Gastrocnemius medialis (tissue), 4 donors: ENCODE measurements at regions of chr20 and their contacts with region 1.

Region 1: DNA sequence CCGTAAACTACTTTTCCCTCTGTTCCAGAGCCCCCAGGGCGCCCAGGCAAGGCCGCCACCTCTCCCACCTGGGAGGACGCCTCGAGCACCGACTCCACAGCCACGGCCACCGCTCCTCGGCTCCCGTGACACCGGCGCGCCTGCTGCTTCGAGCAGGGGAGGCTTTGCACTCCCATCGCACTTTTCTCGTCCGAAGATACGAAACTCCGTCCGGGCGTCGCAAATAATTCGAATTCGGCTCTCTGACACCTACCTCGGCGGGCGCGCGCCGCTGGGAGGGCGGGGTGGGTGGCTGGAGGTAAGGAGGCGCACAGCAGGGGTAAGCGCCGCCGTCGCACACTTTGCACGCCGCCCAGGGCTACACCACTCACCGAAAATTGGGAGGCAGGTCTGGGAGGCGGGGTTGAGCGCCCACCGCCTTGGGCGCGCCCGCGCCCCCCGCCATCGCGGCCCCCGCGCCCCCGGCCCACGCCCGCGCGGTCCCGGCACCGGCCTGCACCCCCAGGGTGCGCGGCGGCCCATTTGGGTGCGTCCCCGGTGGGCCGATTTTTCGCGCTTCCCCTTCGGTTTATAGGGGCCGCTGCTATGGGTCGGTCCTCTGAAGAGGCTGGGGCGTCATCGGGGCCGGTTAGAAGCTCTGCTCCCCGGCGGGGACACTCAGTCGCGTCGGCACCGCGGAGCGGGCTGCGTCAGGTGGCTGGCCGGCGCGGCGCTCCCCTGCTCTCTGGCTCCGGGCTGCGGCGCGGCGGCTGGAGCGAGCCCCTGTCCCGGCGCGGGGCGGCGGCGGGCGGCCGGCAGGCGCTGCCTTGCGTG is 36.2 kb downstream of the GNAS start:
- DNase-seq: peak; percentile 74 to 82
- ATAC-seq: peak; percentile 50 to 51
- H3K4me3 ChIP-seq: peak overlapping the region; percentile 68 to 95 (median 78)
- H3K27ac ChIP-seq: peak overlapping the region; percentile 97 to 100 (median 99)
- H3K4me1 ChIP-seq: peaks cover 12 to 16% of the 10 kb centered on the region in 2 donors
- H3K27me3 ChIP-seq: no peaks in the 10 kb centered on the region
- CTCF ChIP-seq: no peak
- POLR2A ChIP-seq: peak; percentile 97 to 98

Region 2: DNA sequence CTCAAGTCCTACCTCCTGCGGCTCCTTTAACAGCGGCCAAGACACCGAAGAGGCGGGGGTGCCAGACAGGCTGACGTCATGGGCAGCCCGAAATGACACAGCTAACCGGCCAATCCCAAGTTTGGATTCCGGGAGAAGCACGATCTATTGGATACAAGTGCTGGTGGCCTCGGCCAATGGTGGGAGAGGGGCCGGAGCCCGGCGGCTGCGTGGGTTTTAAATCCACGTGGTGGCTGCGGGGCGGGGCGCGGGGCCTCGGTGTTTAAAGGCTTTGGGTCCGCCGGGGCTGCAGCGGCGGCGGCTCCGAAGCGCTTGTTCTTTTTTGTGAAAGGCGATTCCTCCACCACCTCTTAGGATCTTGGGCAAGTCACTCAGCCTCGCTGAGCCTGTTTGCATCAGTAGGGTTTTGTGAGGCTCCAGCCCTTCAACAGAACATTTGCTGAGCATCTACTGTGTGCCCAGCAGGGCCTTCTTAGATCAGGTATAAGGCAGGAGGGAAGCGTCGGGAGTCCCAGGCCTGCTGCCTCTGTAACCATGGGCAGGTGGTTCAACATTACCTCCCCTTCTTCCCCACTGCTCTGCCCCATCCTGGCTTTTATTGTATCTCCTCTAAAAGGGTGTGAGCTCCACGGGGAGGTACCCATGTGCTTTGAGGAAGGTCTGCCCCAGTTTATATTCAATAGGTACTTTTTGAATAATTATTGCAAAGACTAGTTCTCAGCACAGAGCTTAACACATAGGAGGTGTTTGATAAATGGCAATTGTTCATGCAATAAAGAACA is 1170.0 kb before region 1 on chr20:
- in situ Hi-C with region 1: no loop called
- intact Hi-C with region 1: loop called (anchors 10 kb)
- DNase-seq: peak; percentile 97 to 98
- ATAC-seq: peak; percentile 92 to 96
- H3K4me3 ChIP-seq: peak overlapping the region; percentile 32 to 45 (median 36)
- H3K27ac ChIP-seq: peak overlapping the region; percentile 21 to 79 (median 57)
- H3K4me1 ChIP-seq: peaks cover 49 to 54% of the 10 kb centered on the region in 2 donors
- H3K27me3 ChIP-seq: no peaks in the 10 kb centered on the region
- CTCF ChIP-seq: no peak
- POLR2A ChIP-seq: no peak

Region 3: GRCh38 chr20:58907399-58908137 is 18.8 kb after region 1 on chr20:
- in situ Hi-C with region 1: no loop called
- intact Hi-C with region 1: loop called (anchors 1 kb)
- DNase-seq: peak; percentile 96 to 98
- ATAC-seq: peak; percentile 95 to 96
- H3K4me3 ChIP-seq: peak overlapping the region; percentile 32 to 40 (median 34)
- H3K27ac ChIP-seq: peak overlapping the region; percentile 84 to 99 (median 96)
- H3K4me1 ChIP-seq: peaks cover 30 to 54% of the 10 kb centered on the region in 2 donors
- H3K27me3 ChIP-seq: no peaks in the 10 kb centered on the region
- CTCF ChIP-seq: no peak
- POLR2A ChIP-seq: peak; percentile 56 to 77

Region 4: DNA sequence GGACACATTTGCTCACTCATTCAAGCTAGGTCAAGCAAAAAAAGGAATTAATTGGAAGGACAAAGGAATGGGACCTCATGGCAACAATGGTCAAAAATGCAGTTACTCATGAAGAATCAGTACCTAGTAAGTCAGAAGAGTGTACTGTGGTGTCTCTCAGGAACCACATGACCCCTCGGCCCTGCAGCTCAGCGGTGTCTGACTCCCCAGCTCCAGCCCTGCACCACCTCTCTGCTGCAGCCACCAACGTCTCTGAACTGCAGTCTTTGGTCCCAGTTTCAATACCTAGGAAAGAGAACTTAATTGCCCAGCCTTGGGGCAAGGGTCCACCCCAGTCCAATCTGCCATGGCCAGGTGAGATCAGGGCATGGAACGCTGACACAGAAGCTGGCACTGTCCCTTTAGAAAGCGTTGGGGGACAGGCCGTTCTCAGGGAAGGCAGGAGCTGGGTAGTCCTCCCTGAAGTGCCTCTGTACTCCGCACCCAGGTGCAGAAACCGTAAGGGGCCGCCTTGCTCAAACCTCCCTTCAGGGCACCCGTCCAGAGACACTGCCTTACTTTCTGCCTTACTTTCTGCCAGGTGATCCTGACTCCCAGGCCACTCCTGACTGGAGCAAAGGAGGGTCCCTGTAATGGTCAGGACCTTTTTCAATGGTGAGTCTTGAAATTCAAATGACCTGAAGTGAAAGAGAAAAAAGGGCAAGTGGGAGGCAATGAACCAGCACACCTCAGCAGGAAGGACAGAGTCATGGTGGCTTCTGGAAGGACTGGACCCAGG is 79.1 kb after region 1 on chr20:
- in situ Hi-C with region 1: no loop called
- intact Hi-C with region 1: no loop called
- DNase-seq: no peak
- ATAC-seq: no peak
- H3K4me3 ChIP-seq: no peak overlapping the region
- H3K27ac ChIP-seq: no peak overlapping the region
- H3K4me1 ChIP-seq: no peaks in the 10 kb centered on the region
- H3K27me3 ChIP-seq: no peaks in the 10 kb centered on the region
- CTCF ChIP-seq: no peak
- POLR2A ChIP-seq: no peak

Region 5: DNA sequence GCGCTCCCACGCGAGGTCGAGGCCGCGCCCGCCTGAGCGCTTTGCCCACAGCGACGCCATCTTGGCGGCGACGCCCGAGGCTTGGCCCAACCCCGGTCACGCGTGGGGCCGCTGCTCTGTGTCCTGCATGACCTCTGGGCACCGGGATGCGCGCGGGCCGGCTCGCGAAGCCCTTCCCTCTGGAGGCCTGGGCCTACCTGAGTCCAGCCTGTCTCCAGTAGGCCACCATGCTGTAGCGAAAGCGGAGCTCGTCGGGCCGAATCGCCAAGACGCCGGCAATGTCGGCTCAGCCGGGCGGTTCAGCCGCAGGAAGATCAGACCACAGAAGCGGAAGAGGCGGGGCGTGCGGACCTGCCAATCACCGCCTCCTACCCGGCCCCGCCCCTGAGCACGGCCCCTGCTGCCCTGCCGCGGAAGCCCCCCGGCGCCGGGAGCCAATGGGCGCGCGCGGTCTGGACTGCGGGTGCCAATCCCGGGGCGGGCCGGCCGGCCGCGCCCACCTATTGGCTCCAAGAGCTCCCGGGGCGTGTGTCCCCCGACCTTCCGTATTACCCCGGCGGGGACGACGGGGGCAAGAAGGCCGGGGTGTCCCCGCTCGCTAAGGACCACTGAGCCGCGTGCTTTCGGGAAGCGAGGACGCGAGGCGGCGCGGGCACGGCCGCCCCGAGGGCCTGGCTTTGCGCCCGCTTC is 143.4 kb after region 1 on chr20 and contains the start of gene ATP5F1E:
- in situ Hi-C with region 1: no loop called
- intact Hi-C with region 1: loop called (anchors 2 kb)
- DNase-seq: peak; percentile 95
- ATAC-seq: peak; percentile 95 to 97
- H3K4me3 ChIP-seq: peak within 1 kb of the TSS; percentile 79 to 92 (median 88)
- H3K27ac ChIP-seq: peak within 1 kb of the TSS; percentile 89 to 97 (median 95)
- H3K4me1 ChIP-seq: peaks cover 47% of the 10 kb centered on the region in 2 donors
- H3K27me3 ChIP-seq: no peaks in the 10 kb centered on the region
- CTCF ChIP-seq: no peak
- POLR2A ChIP-seq: peak; percentile 96 to 98
- total RNA-seq, gene ATP5F1E: 27.1 to 38.2 (median 33.7) TPM

Region 6: GRCh38 chr20:59940174-59940971 is 1051.6 kb after region 1 on chr20 and contains the starts of genes FAM217B and PPP1R3D:
- in situ Hi-C with region 1: no loop called
- intact Hi-C with region 1: loop called (anchors 5 kb)
- DNase-seq: peak; percentile 97 to 98
- ATAC-seq: peak; percentile 74 to 77
- H3K4me3 ChIP-seq: peak within 1 kb of the TSS; percentile 62 to 90 (median 74)
- H3K27ac ChIP-seq: peak within 1 kb of the TSS; percentile 91 to 99 (median 93)
- H3K4me1 ChIP-seq: peaks cover 58 to 65% of the 10 kb centered on the region in 2 donors
- H3K27me3 ChIP-seq: no peaks in the 10 kb centered on the region
- CTCF ChIP-seq: peak in 1 of 5 experiments; percentile 6
- POLR2A ChIP-seq: peak; percentile 82 to 90
- total RNA-seq, gene FAM217B: 2.8 to 6.9 (median 6.4) TPM
- total RNA-seq, gene PPP1R3D: 4.1 to 12.0 (median 10.8) TPM